Upper lobe of right lung (tissue), 1 donor: ENCODE measurements at regions of chr11 and their contacts with region 1.

Region 1: GRCh38 chr11:63738720-63739360 is 29.7 kb downstream of the ZFTA start:
- DNase-seq: no peak
- ATAC-seq: peak; percentile 95
- H3K4me3 ChIP-seq: no peak overlapping the region
- H3K27ac ChIP-seq: no peak overlapping the region
- H3K4me1 ChIP-seq: peaks cover 8% of the 10 kb centered on the region
- H3K27me3 ChIP-seq: no peaks in the 10 kb centered on the region
- CTCF ChIP-seq: peak; percentile 99

Region 2: DNA sequence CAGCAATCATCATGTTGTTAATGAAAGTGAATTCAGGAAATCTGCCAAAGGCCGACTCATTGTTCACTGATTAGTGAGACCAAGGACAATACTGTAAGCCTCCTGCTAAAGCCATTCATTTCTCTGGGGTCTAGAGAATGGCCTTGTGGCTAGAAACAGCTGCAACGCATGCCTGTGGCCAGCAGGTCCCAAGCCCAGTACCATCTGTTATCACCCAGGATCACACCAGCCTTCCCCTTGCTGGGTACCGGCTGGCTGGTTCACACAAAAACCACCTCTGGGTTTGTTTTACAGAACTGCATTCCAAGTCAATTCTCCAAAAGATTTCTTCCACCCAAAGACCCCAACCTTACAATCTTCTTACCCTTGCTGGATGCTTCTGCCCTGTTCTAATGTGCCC is 249.0 kb before region 1 on chr11:
- intact Hi-C with region 1: loop called (anchors 10 kb)
- DNase-seq: no peak
- ATAC-seq: no peak
- H3K4me3 ChIP-seq: peak overlapping the region; percentile 54
- H3K27ac ChIP-seq: no peak overlapping the region
- H3K4me1 ChIP-seq: peaks cover 11% of the 10 kb centered on the region
- H3K27me3 ChIP-seq: no peaks in the 10 kb centered on the region
- CTCF ChIP-seq: no peak

Region 3: GRCh38 chr11:63641727-63642126 is 97.1 kb before region 1 on chr11:
- intact Hi-C with region 1: no loop called
- DNase-seq: no peak
- ATAC-seq: no peak
- H3K4me3 ChIP-seq: no peak overlapping the region
- H3K27ac ChIP-seq: no peak overlapping the region
- H3K4me1 ChIP-seq: no peaks in the 10 kb centered on the region
- H3K27me3 ChIP-seq: no peaks in the 10 kb centered on the region
- CTCF ChIP-seq: no peak

Region 4: DNA sequence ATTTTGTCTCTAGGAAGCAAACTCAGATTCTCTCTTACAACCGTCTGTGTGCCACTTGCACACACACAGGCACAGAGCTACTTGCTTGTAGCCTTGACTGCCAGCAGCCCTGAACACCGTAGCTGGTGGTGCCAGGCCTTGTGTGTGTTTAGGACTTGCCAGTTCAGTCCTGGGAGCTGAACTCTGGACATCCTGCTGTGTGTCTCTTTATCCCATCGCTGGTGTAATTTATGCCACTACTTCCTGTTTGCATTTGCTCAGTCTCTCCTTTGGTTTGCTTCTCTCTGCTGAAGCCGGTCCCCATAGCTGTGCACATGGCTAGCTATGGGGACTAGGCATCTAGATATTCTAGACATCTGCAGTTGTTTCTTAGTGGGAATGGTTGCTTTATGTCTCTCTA is 124.1 kb after region 1 on chr11:
- intact Hi-C with region 1: no loop called
- DNase-seq: no peak
- ATAC-seq: peak; percentile 69
- H3K4me3 ChIP-seq: no peak overlapping the region
- H3K27ac ChIP-seq: peak overlapping the region; percentile 38
- H3K4me1 ChIP-seq: peaks cover 46% of the 10 kb centered on the region
- H3K27me3 ChIP-seq: no peaks in the 10 kb centered on the region
- CTCF ChIP-seq: no peak